ENCODE measurements at regions of chr2 and their contacts with region 1.

Region 1: GRCh38 chr2:234355021-234355720 is 141.7 kb downstream of the ARL4C start:
- H3K4me3 ChIP-seq: no peak overlapping the region
- H3K27ac ChIP-seq: no peak overlapping the region
- H3K4me1 ChIP-seq: no peaks in the 10 kb centered on the region
- CTCF ChIP-seq: no peak

Region 2: GRCh38 chr2:234450201-234451124 is 95.3 kb after region 1 on chr2:
- CTCF ChIA-PET with region 1: no interaction called
- POLR2A ChIA-PET with region 1: interaction called, 10 read pairs
- H3K4me3 ChIP-seq: no peak overlapping the region
- H3K27ac ChIP-seq: no peak overlapping the region
- H3K4me1 ChIP-seq: 0 out of 2 replicates have a peak, but pooled peaks cover 2% of the 10 kb centered on the region
- CTCF ChIP-seq: no peak

Measured in HEK293 (cell line).